ENCODE measurements at regions of chr20 and their contacts with region 1.

Region 1: GRCh38 chr20:41095110-41095969 is 42.0 kb upstream of the PLCG1 start:
- DNase-seq: no peak
- ATAC-seq: peak; percentile 88
- H3K4me3 ChIP-seq: no peak overlapping the region
- H3K27ac ChIP-seq: no peak overlapping the region
- H3K4me1 ChIP-seq: no peaks in the 10 kb centered on the region
- H3K27me3 ChIP-seq: no peaks in the 10 kb centered on the region
- CTCF ChIP-seq: peak; percentile 74 to 85 (median 84)
- EP300 ChIP-seq: no peak
- POLR2A ChIP-seq: no peak
- RAD21 ChIP-seq: peak; percentile 85

Region 2: DNA sequence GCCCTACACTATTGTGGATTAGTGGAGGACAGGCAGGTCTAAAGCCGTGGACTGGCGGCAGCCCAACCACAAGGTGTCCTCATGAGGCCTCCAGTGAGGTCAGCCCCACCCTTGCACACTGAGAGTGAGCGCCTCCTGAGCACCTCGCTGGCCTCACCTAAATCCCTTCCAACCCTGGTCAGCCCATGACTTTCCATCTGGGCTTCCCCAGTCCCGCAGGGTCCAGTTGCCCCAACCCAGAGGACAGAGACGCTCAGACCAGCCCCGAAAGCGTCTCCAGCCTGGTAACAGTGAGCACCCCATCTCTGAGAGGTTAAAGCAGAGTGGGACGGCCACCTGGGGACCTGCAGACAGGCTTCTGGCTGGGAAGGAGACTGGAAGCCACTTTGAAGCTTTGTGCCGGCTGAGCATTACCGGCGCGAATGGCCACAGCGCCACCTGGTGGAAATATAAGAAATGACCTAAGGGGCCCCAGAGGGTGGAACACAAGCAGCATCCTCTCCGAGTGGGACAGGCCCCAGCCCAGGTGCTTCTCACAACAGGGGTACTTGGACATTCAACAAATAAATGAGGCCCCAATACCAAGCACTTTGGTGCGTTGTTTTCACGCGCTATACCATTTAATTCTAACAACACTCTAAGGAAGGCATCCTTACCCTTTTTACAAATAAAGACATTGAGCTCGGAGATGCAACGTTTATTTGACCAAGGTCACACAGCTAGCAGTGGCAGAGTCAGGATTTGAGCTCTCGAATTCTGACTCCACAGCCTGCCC is 132.4 kb before region 1 on chr20:
- CTCF ChIA-PET with region 1: interaction called, 127 read pairs
- POLR2A ChIA-PET with region 1: no interaction called
- RAD21 ChIA-PET with region 1: interaction called, 34 read pairs
- SMC1A ChIA-PET with region 1: interaction called, 50 read pairs
- in situ Hi-C with region 1: no loop called
- intact Hi-C with region 1: loop called (anchors 1 kb)
- DNase-seq: no peak
- ATAC-seq: peak; percentile 93
- H3K4me3 ChIP-seq: no peak overlapping the region
- H3K27ac ChIP-seq: no peak overlapping the region
- H3K4me1 ChIP-seq: no peaks in the 10 kb centered on the region
- H3K27me3 ChIP-seq: no peaks in the 10 kb centered on the region; a peak in 1 of 4 replicates
- CTCF ChIP-seq: peak; percentile 76 to 92 (median 78)
- EP300 ChIP-seq: no peak
- POLR2A ChIP-seq: no peak
- RAD21 ChIP-seq: peak; percentile 91

Region 3: GRCh38 chr20:40980106-40980827 is 115.1 kb before region 1 on chr20:
- CTCF ChIA-PET with region 1: interaction called, 326 read pairs
- POLR2A ChIA-PET with region 1: interaction called, 3 read pairs
- RAD21 ChIA-PET with region 1: interaction called, 12 read pairs
- SMC1A ChIA-PET with region 1: interaction called, 15 read pairs
- in situ Hi-C with region 1: no loop called
- intact Hi-C with region 1: no loop called
- DNase-seq: peak; percentile 83
- ATAC-seq: peak; percentile 86
- H3K4me3 ChIP-seq: peak overlapping the region; percentile 20; the same call in 1 of the 2 replicates
- H3K27ac ChIP-seq: peak overlapping the region; percentile 75
- H3K4me1 ChIP-seq: peaks cover 32% of the 10 kb centered on the region
- H3K27me3 ChIP-seq: no peaks in the 10 kb centered on the region
- CTCF ChIP-seq: no peak
- EP300 ChIP-seq: peak; percentile 6 to 48; a peak in 2 of 4 replicates
- POLR2A ChIP-seq: 0 out of 2 replicates have a peak, but pooled peaks have one; percentile 39
- RAD21 ChIP-seq: 0 out of 2 replicates have a peak, but pooled peaks have one; percentile 23

Region 4: GRCh38 chr20:41028348-41029148 is 66.8 kb before region 1 on chr20 and contains the start of gene TOP1:
- CTCF ChIA-PET with region 1: interaction called, 10 read pairs
- POLR2A ChIA-PET with region 1: no interaction called
- RAD21 ChIA-PET with region 1: interaction called, 5 read pairs
- SMC1A ChIA-PET with region 1: interaction called, 9 read pairs
- in situ Hi-C with region 1: no loop called
- intact Hi-C with region 1: no loop called
- DNase-seq: peak; percentile 98
- ATAC-seq: peak; percentile 93
- H3K4me3 ChIP-seq: peak within 1 kb of the TSS; percentile 97
- H3K27ac ChIP-seq: peak within 1 kb of the TSS; percentile 95
- H3K4me1 ChIP-seq: peaks cover 5% of the 10 kb centered on the region
- H3K27me3 ChIP-seq: no peaks in the 10 kb centered on the region
- CTCF ChIP-seq: no peak
- EP300 ChIP-seq: no peak
- POLR2A ChIP-seq: peak; percentile 96
- RAD21 ChIP-seq: no peak
- polyA plus RNA-seq, gene TOP1: 36.1 to 47.6 TPM

Region 5: DNA sequence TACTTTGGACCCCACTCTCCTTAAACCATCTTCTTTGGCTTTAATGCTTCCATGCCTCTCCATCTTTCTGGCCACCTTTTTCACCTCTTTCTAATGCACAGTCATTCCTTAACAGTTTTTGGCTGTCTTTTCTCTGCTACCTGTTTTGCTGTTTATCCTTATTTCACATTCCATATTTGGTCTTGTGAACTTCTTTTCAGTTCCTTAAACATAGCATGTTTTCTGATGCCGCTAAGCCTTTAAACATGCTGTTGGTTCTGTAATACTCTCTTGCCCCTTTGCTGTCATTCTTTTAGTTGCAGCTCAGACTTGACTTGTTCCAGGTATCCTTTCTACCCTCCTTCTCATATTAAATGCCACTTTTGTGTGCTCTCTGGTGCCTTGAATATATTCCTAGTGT is 31.0 kb before region 1 on chr20:
- CTCF ChIA-PET with region 1: interaction called, 17 read pairs
- POLR2A ChIA-PET with region 1: no interaction called
- RAD21 ChIA-PET with region 1: interaction called, 4 read pairs
- SMC1A ChIA-PET with region 1: interaction called, 9 read pairs
- in situ Hi-C with region 1: no loop called
- intact Hi-C with region 1: no loop called
- DNase-seq: peak; percentile 68
- ATAC-seq: peak; percentile 93
- H3K4me3 ChIP-seq: no peak overlapping the region
- H3K27ac ChIP-seq: peak overlapping the region; percentile 62
- H3K4me1 ChIP-seq: peaks cover 20% of the 10 kb centered on the region
- H3K27me3 ChIP-seq: no peaks in the 10 kb centered on the region
- CTCF ChIP-seq: peak; percentile 8 to 59 (median 36); a peak in 3 of 6 replicates
- EP300 ChIP-seq: no peak; a peak in 1 of 4 replicates
- POLR2A ChIP-seq: no peak
- RAD21 ChIP-seq: peak; percentile 77

Region 6: DNA sequence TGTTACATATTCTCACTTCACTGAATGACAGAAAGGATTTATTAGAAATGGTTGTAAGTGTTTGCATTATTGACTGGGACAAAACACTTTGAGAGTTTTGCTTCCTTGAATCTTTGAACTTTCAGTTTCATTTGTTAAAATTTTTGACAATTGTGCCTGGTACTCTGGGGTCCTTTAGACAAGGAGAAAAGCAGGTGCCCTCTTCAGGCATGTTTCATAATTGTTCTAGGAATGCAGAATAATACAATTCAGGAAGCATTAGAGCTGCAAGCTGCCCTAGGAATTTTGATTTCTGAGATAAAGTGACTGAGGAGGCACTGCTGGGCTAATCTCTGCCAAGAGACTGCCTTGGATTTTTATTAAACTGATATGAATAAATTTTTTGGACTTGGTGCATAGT is 17.0 kb before region 1 on chr20:
- CTCF ChIA-PET with region 1: interaction called, 25 read pairs
- POLR2A ChIA-PET with region 1: no interaction called
- RAD21 ChIA-PET with region 1: interaction called, 7 read pairs
- SMC1A ChIA-PET with region 1: interaction called, 10 read pairs
- in situ Hi-C with region 1: no loop called
- intact Hi-C with region 1: no loop called
- DNase-seq: peak; percentile 21
- ATAC-seq: peak; percentile 71
- H3K4me3 ChIP-seq: no peak overlapping the region
- H3K27ac ChIP-seq: no peak overlapping the region
- H3K4me1 ChIP-seq: peaks cover 12% of the 10 kb centered on the region
- H3K27me3 ChIP-seq: no peaks in the 10 kb centered on the region
- CTCF ChIP-seq: peak in 2 of 3 experiments; percentile 20 to 21; a peak in 1 of 6 replicates
- EP300 ChIP-seq: no peak
- POLR2A ChIP-seq: no peak
- RAD21 ChIP-seq: peak; percentile 50

Region 7: DNA sequence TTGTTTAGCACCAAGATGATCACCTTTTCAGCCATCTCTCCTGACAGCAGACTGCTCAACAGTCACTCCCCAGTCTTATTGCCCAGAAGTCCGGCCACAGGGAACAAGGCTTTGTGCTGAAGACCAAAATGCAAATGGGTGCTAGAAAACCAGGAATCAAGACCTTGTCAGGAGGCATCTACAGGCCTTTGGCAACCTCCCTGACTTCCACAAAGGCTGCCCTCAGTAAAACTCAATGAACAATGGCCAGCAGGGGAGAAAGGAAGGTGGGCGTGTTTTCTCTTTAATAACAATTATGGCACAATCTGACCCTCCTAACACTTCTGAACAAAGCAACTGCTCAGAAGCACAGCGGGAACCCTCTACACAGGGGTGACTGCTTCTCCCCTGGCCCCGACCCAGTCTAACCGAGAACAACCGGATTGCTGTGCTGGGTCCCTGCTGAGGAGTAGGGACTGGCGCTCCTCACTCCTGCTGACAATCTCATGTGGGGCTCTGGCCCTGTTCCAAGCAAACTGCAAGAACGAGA is 83.6 kb after region 1 on chr20:
- CTCF ChIA-PET with region 1: no interaction called
- POLR2A ChIA-PET with region 1: no interaction called
- RAD21 ChIA-PET with region 1: no interaction called
- SMC1A ChIA-PET with region 1: no interaction called
- in situ Hi-C with region 1: no loop called
- intact Hi-C with region 1: no loop called
- DNase-seq: no peak
- ATAC-seq: no peak
- H3K4me3 ChIP-seq: no peak overlapping the region
- H3K27ac ChIP-seq: no peak overlapping the region
- H3K4me1 ChIP-seq: no peaks in the 10 kb centered on the region
- H3K27me3 ChIP-seq: no peaks in the 10 kb centered on the region
- CTCF ChIP-seq: no peak
- EP300 ChIP-seq: no peak
- POLR2A ChIP-seq: no peak
- RAD21 ChIP-seq: no peak

Region 8: DNA sequence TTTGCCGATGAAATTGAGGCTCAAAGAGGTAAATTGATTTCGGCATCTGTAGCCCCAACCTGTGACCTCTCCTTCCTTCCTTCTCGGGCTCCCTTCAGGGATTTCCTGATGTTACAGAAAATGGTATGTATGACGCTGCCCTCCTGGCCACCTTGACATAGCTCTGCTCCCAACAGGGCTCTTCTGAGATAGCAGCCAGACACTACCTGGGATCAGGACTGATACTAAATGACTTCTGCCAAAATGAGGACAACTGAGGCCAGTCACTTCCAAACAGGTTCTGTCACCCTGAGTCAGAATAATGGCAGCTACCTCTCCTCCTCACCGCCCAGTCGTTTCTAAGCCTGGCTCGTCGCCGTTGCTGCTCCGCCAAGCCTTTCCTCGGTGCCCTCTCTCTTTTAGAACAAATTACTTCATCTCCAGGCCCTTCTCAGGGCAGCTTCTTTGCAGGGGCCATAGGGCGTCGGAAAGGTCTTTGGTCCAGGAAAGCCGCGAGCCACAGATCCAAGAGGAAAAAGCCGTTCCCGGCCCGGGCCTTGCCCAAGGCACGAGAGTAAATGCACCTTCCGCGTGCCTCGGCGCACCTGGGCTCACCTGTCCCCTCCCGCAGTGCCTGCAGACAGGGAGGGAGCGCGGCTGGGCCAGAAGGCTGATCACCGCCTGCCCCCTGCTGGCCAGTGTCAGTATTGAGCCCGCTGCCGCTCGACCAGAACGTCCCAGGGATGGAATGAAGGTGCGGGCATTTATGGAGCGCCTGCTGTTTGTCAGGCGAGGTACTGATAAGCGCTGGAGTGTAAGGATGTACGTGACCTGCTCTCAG is 244.4 kb after region 1 on chr20:
- CTCF ChIA-PET with region 1: interaction called, 24 read pairs
- POLR2A ChIA-PET with region 1: no interaction called
- RAD21 ChIA-PET with region 1: no interaction called
- SMC1A ChIA-PET with region 1: interaction called, 4 read pairs
- in situ Hi-C with region 1: no loop called
- intact Hi-C with region 1: loop called (anchors 5 kb)
- DNase-seq: no peak
- ATAC-seq: peak; percentile 96
- H3K4me3 ChIP-seq: peak overlapping the region; percentile 68
- H3K27ac ChIP-seq: no peak overlapping the region
- H3K4me1 ChIP-seq: peaks cover 5% of the 10 kb centered on the region
- H3K27me3 ChIP-seq: no peaks in the 10 kb centered on the region
- CTCF ChIP-seq: peak; percentile 92 to 96 (median 95)
- EP300 ChIP-seq: no peak
- POLR2A ChIP-seq: no peak
- RAD21 ChIP-seq: peak; percentile 96

Measured in GM12878 (cell line).